Activated B cell treated with CpG ODN at 0.5 μM for 24 hours (primary cell): ENCODE measurements at regions of chr6 and their contacts with region 1.

Region 1: DNA sequence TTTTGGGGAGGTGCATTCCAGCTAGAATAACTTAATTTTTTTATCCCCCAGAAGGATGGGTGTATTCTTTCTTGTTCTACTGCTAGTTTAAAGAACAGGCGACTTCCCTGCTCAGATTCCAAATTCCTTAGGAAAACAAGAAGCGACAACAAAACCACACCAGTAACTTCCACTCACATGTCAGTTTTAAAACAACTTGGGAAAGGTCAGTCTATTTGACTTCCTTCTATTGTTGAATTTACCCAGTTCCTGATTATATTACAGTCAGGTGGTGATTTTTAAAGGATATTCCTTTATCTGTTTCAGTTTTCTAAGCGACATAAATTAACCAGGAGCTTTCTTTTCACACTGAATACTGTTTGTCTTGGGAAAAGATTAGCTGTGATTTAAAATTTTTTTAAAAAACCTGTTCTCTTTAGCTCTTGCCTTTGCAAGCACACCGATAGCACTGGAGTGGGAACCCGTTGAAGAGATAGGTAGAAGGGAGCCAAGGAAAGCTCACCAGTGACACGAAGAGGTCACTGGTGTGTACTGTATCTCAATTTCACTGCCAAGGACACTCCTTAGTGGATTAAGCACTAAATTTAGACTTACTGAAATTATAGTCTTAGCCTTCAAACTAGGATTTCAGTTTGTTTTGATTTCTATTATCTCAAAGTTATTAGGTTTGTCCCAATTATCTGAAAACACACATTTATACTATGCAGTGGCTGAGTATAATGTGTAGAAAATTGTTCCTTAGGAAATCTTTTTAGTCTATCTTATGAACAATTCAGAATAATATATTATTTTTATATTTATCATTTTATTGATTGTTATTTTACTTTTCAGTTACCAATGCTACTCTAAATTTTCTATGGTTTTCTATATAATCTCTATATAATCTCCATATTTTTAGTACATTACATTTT is 22.3 kb downstream of the MARCKS start:
- DNase-seq: no peak
- ATAC-seq: peak; percentile 100
- H3K4me3 Mint-ChIP-seq: no peak overlapping the region
- H3K27ac Mint-ChIP-seq: no peak overlapping the region
- H3K4me1 Mint-ChIP-seq: peaks cover 7% of the 10 kb centered on the region
- H3K27me3 Mint-ChIP-seq: peaks cover 5% of the 10 kb centered on the region
- CTCF ChIP-seq: no peak

Region 2: GRCh38 chr6:112879920-112880413 is 999.5 kb before region 1 on chr6:
- CTCF ChIA-PET with region 1: interaction called, 8 read pairs
- POLR2A ChIA-PET with region 1: no interaction called
- intact Hi-C with region 1: loop called (anchors 1 kb)
- DNase-seq: no peak
- ATAC-seq: peak; percentile 62
- H3K4me3 Mint-ChIP-seq: peak overlapping the region; percentile 33
- H3K27ac Mint-ChIP-seq: no peak overlapping the region
- H3K4me1 Mint-ChIP-seq: no peaks in the 10 kb centered on the region
- H3K27me3 Mint-ChIP-seq: peaks cover 2% of the 10 kb centered on the region
- CTCF ChIP-seq: no peak

Region 3: GRCh38 chr6:113755449-113756289 is 123.8 kb before region 1 on chr6:
- CTCF ChIA-PET with region 1: no interaction called
- POLR2A ChIA-PET with region 1: no interaction called
- intact Hi-C with region 1: no loop called
- DNase-seq: peak; percentile 25
- ATAC-seq: peak; percentile 86
- H3K4me3 Mint-ChIP-seq: peak overlapping the region; percentile 60
- H3K27ac Mint-ChIP-seq: peak overlapping the region; percentile 82
- H3K4me1 Mint-ChIP-seq: peaks cover 46% of the 10 kb centered on the region
- H3K27me3 Mint-ChIP-seq: no peaks in the 10 kb centered on the region
- CTCF ChIP-seq: no peak

Region 4: GRCh38 chr6:113909234-113909856 is 29.9 kb after region 1 on chr6:
- CTCF ChIA-PET with region 1: interaction called, 4 read pairs
- POLR2A ChIA-PET with region 1: no interaction called
- intact Hi-C with region 1: loop called (anchors 1 kb)
- DNase-seq: no peak
- ATAC-seq: peak; percentile 37
- H3K4me3 Mint-ChIP-seq: no peak overlapping the region
- H3K27ac Mint-ChIP-seq: no peak overlapping the region
- H3K4me1 Mint-ChIP-seq: no peaks in the 10 kb centered on the region
- H3K27me3 Mint-ChIP-seq: peaks cover 2% of the 10 kb centered on the region
- CTCF ChIP-seq: peak; percentile 63

Region 5: DNA sequence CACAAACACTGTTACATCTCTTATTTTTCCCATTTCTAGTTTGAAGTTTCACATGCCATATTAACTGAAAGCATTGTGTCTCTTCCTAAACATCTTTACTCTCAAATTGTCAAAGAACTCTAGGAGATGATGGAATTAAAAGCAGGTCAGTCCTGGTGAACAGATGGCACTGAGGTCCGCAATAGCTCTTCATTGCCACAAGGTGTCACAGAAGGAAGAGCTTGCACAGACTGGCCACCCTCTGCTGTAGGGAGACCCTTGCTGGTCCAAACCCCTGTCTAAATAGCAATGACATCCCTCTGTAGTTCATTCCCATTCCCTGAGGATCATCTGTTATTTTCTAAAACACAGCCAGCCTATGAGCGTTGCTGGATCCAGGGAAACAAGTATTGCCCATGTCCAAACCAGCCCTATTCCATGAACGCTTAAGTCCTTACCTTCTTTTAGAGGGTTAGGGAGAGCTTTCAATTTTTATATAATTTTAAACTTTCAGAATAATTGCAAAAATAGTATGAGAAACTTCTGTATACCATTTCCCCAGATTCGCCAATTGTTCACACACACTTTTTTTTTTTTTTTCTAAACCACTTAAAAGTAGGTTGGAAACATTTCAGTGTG is 101.6 kb after region 1 on chr6:
- CTCF ChIA-PET with region 1: no interaction called
- POLR2A ChIA-PET with region 1: no interaction called
- intact Hi-C with region 1: no loop called
- DNase-seq: no peak
- ATAC-seq: peak; percentile 45
- H3K4me3 Mint-ChIP-seq: no peak overlapping the region
- H3K27ac Mint-ChIP-seq: no peak overlapping the region
- H3K4me1 Mint-ChIP-seq: peaks cover 22% of the 10 kb centered on the region
- H3K27me3 Mint-ChIP-seq: no peaks in the 10 kb centered on the region
- CTCF ChIP-seq: no peak